Vagina (tissue), 2 donors: ENCODE measurements at regions of chr22 and their contacts with region 1.

Region 1: DNA sequence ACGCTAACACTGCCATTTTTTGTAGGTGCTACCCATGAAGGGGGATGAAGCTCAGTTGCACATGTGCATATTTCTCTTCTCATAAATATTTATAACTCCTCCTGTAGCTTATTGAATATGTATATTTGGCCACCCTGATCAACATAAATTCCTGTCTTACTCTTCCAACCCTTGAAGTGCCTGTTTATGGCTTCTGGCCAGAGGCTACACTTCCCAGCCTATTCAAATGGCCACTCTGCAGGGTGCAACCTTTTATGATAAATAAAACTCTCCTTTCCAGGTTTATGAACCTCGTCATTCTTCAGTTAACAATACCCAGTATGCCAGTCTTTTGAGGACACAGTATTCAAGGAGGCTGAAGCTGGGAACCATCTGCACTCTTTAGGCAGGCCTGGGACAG is 2.5 kb upstream of the RTL6 start:
- DNase-seq: no peak
- H3K4me3 ChIP-seq: no peak overlapping the region
- H3K27ac ChIP-seq: no peak overlapping the region
- H3K4me1 ChIP-seq: peaks cover 23% of the 10 kb centered on the region
- H3K27me3 ChIP-seq: no peaks in the 10 kb centered on the region
- CTCF ChIP-seq: no peak
- POLR2A ChIP-seq: no peak

Region 2: GRCh38 chr22:44526779-44527126 is 26.2 kb after region 1 on chr22:
- intact Hi-C with region 1: loop called (anchors 2 kb)
- DNase-seq: peak in 1 of 2 donors; percentile 55
- H3K4me3 ChIP-seq: no peak overlapping the region
- H3K27ac ChIP-seq: no peak overlapping the region
- H3K4me1 ChIP-seq: no peaks in the 10 kb centered on the region
- H3K27me3 ChIP-seq: no peaks in the 10 kb centered on the region
- CTCF ChIP-seq: no peak
- POLR2A ChIP-seq: no peak

Region 3: GRCh38 chr22:44595841-44596341 is 95.3 kb after region 1 on chr22:
- intact Hi-C with region 1: no loop called
- DNase-seq: no peak
- H3K4me3 ChIP-seq: peak overlapping the region in 1 of 2 donors; percentile 24
- H3K27ac ChIP-seq: no peak overlapping the region
- H3K4me1 ChIP-seq: peaks cover 10% of the 10 kb centered on the region
- H3K27me3 ChIP-seq: no peaks in the 10 kb centered on the region
- CTCF ChIP-seq: no peak
- POLR2A ChIP-seq: no peak